PC-3 (cell line): ENCODE measurements at regions of chr16 and their contacts with region 1.

Region 1: DNA sequence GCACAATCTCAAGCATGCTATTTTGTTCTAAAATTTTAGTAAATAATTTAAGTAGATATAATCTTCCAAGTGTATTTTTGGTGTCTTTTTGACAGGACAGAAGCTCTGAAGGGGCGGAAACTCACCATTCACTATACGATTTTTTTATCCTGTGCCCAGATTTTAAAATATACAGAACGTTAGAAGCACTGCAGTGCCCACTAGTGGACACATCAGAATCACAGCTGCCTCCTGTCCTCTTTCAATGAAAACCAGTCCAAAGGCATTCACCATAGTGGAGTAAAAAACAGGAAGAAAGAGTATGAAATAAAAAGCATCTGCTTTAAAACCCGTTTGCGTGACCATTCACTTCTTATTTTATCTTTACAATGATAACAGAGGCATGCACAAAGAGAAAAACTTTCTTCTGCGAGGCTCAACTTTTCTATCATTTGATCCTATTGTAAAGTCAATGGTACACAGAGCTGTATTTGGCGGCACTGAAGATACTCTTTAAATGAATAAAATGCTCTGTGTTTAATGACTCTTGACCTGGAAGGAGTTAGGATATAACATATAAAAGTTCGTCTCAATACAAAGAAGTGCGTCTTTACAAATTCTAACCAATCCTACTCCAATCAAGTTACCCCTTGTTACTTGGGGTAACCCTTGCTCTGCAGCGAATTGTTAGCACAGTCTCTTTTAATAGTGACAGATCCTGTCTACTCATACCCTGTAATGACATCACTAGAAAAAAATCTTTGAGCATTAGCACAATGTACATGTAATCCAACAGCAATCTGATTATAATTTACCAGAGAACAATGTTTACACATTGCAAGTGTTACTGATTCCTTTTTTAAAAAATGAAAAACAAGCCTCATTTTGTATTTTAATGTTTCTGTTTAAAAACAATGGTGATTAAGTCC is 339.8 kb upstream of the PSMD7 start:
- DNase-seq: peak; percentile 64
- ATAC-seq: peak; percentile 50
- H3K4me3 ChIP-seq: no peak overlapping the region
- H3K27ac ChIP-seq: no peak overlapping the region
- H3K4me1 ChIP-seq: no peaks in the 10 kb centered on the region
- H3K27me3 ChIP-seq: peaks cover 13% of the 10 kb centered on the region; the same call in 1 of the 2 replicates
- CTCF ChIP-seq: peak; percentile 75

Region 2: DNA sequence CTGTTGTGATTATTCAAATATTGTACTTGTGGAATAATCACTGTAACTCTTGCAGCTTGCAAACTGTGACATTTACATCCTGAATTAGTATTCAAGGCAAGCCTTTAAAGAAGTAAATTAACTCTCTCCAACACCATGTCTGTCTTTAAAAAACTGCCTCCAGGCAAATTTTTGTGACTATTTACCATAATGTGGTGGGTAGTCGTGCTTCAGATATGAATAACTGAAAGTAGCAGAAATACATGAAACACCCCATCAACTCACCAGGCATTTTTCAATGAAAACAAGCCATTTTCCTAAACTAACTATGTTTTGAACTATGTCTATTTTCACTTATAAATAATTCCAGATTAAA is 122.4 kb after region 1 on chr16:
- CTCF ChIA-PET with region 1: no interaction called
- POLR2A ChIA-PET with region 1: no interaction called
- intact Hi-C with region 1: no loop called
- DNase-seq: no peak
- ATAC-seq: no peak
- H3K4me3 ChIP-seq: no peak overlapping the region
- H3K27ac ChIP-seq: no peak overlapping the region
- H3K4me1 ChIP-seq: no peaks in the 10 kb centered on the region
- H3K27me3 ChIP-seq: peaks cover 7% of the 10 kb centered on the region; the same call in 1 of the 2 replicates
- CTCF ChIP-seq: no peak

Region 3: DNA sequence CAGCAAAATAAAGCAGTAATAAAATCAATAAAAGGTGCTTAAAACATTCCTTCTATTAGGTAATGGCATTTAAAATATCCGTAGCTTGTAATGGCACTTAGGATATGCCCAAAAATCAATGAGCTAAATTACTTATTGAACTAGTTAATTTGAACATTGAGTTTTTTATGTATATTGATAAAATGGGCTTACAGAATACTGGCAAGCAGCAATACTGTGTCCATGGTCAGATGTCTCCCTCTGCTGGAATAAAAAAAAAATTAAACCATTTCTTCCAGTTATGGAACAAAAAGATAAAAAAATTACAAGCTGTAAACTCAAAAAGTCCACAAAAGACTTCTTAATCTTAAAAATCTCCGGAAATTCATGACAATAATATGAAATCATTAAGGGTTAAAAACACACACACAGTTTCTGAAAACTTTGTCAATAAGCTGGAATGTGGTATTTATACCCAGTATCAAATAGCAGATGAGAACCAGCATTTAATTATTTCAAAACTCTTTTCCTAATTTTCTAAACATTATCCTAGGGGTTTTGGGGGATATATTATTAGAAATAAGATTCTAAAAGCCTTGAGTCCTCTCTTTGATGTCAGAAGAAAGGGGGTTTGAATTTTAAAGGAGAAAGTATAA is 318.3 kb after region 1 on chr16:
- CTCF ChIA-PET with region 1: no interaction called
- POLR2A ChIA-PET with region 1: no interaction called
- intact Hi-C with region 1: loop called (anchors 5 kb)
- DNase-seq: peak; percentile 45
- ATAC-seq: no peak
- H3K4me3 ChIP-seq: no peak overlapping the region
- H3K27ac ChIP-seq: no peak overlapping the region
- H3K4me1 ChIP-seq: no peaks in the 10 kb centered on the region
- H3K27me3 ChIP-seq: peaks cover 24% of the 10 kb centered on the region; the same call in 1 of the 2 replicates
- CTCF ChIP-seq: peak; percentile 64